ENCODE measurements at regions of chr22 and their contacts with region 1.

Region 1: GRCh38 chr22:41576877-41577276 is 12.8 kb downstream of the PMM1 start:
- DNase-seq: peak; percentile 31
- H3K4me3 ChIP-seq: no peak overlapping the region
- H3K27ac ChIP-seq: no peak overlapping the region
- H3K4me1 ChIP-seq: no peaks in the 10 kb centered on the region
- H3K27me3 ChIP-seq: no peaks in the 10 kb centered on the region
- CTCF ChIP-seq: peak; percentile 52 to 57
- POLR2A ChIP-seq: no peak

Region 2: GRCh38 chr22:41589391-41590241 is 12.7 kb after region 1 on chr22 and contains the start of gene PMM1:
- CTCF ChIA-PET with region 1: interaction called, 14 read pairs
- POLR2A ChIA-PET with region 1: interaction called, 5 read pairs
- dilution Hi-C with region 1: no loop called
- intact Hi-C with region 1: no loop called
- DNase-seq: peak; percentile 100
- H3K4me3 ChIP-seq: peak within 1 kb of the TSS; percentile 25 to 70 (median 54)
- H3K27ac ChIP-seq: peak within 1 kb of the TSS; percentile 30
- H3K4me1 ChIP-seq: peaks cover 6% of the 10 kb centered on the region
- H3K27me3 ChIP-seq: no peaks in the 10 kb centered on the region
- CTCF ChIP-seq: no peak
- POLR2A ChIP-seq: peak; percentile 65
- total RNA-seq, gene PMM1: 12.8 and 14.6 TPM in 2 replicates

Measured in endothelial cell of umbilical vein (primary cell).